Dorsolateral prefrontal cortex (tissue), 120 donors: ENCODE measurements at regions of chr18 and their contacts with region 1.

Region 1: DNA sequence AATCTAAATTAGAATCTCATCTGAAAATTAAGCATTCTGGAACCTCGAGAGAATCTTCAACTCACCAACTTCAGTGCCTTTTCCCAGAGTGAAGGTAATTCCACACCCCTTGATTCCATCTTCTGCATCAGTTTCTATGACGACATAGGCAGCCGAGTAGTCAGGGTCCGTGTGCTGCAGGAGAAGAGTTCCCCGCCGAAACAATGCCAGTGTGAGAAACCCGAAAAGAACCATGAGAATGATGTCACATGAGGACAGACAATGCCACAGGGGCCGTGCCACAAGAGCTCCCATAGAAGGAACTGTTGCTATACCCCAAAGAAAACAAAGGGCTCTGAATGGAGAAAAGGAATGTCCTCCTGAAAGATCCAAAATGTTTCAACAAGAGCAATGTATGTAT is 6.0 kb downstream of the ENOSF1 start:
- DNase-seq: no peak
- H3K4me3 ChIP-seq: peak overlapping the region in 1 of 59 donors; percentile 6
- H3K27ac ChIP-seq: peak overlapping the region in 40 of 59 donors; percentile 2 to 80 (median 54)
- H3K27me3 ChIP-seq: peaks cover 0 to 9% (median 0%) of the 10 kb centered on the region in 45 donors
- CTCF ChIP-seq: no peak

Region 2: GRCh38 chr18:658001-658946 is 48.1 kb before region 1 on chr18:
- intact Hi-C with region 1: loop called (anchors 1 to 10 kb)
- DNase-seq: peak; percentile 35 to 88 (median 84)
- H3K4me3 ChIP-seq: peak overlapping the region; percentile 56 to 92 (median 78)
- H3K27ac ChIP-seq: peak overlapping the region in 58 of 59 donors; percentile 30 to 99 (median 88)
- H3K27me3 ChIP-seq: peaks cover 0 to 50% (median 11%) of the 10 kb centered on the region in 45 donors
- CTCF ChIP-seq: peak in 5 of 56 donors; percentile 9 to 26 (median 15)

Region 3: GRCh38 chr18:741931-742512 is 35.6 kb after region 1 on chr18:
- intact Hi-C with region 1: no loop called
- DNase-seq: no peak
- H3K4me3 ChIP-seq: no peak overlapping the region
- H3K27ac ChIP-seq: no peak overlapping the region
- H3K27me3 ChIP-seq: peaks cover 0 to 4% (median 0%) of the 10 kb centered on the region in 45 donors
- CTCF ChIP-seq: peak; percentile 70 to 96 (median 82)